Gastrocnemius medialis (tissue), 4 donors: ENCODE measurements at regions of chr6 and their contacts with region 1.

Region 1: DNA sequence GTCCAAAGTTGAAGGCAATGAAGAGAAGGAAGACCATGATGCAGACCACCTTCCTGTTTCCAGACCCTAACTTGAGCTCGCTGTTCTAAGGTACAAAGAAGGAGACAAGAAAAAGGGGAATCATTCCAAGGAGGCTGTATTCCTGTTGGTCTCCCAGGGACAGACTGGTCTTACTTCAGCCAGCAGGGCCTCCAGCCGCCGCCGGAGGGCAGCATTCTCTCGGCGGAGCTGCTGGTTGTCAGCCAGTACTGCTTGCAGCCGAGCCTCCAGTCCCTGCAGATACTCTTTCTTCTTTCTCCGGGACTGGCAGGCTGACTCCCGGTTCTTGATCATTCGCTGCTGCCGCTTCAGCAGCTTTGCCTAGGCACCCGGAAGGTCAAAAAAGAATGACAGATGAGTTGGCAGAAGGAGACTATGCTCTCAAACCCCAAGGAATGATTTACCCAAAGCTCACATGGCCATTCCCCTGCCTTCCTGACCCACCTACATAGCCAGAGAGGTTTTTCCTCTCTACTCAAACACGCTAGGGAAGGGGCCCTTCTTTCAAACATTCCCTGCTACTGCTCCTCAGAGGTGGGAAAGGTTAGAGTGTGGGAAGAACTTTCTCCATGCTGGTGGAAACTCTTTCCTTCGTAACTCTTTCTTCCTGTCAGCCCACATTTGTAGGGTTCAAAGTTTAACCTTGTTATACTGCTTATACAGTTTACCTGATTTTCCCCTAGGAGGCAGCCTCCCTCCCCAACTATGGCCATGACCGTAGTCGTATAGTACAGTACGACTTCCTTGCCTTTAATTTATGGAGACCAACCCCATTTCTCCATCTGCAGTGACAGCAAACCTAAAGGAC is 9.0 kb downstream of the ATF6B start:
- DNase-seq: peak; percentile 64 to 83
- ATAC-seq: peak; percentile 82 to 88
- H3K4me3 ChIP-seq: no peak overlapping the region
- H3K27ac ChIP-seq: peak overlapping the region in 2 of 4 donors; percentile 25 to 43
- H3K4me1 ChIP-seq: peaks cover 3 to 8% of the 10 kb centered on the region in 2 donors
- H3K27me3 ChIP-seq: no peaks in the 10 kb centered on the region
- CTCF ChIP-seq: peak; percentile 82 to 91 (median 88)
- POLR2A ChIP-seq: no peak

Region 2: DNA sequence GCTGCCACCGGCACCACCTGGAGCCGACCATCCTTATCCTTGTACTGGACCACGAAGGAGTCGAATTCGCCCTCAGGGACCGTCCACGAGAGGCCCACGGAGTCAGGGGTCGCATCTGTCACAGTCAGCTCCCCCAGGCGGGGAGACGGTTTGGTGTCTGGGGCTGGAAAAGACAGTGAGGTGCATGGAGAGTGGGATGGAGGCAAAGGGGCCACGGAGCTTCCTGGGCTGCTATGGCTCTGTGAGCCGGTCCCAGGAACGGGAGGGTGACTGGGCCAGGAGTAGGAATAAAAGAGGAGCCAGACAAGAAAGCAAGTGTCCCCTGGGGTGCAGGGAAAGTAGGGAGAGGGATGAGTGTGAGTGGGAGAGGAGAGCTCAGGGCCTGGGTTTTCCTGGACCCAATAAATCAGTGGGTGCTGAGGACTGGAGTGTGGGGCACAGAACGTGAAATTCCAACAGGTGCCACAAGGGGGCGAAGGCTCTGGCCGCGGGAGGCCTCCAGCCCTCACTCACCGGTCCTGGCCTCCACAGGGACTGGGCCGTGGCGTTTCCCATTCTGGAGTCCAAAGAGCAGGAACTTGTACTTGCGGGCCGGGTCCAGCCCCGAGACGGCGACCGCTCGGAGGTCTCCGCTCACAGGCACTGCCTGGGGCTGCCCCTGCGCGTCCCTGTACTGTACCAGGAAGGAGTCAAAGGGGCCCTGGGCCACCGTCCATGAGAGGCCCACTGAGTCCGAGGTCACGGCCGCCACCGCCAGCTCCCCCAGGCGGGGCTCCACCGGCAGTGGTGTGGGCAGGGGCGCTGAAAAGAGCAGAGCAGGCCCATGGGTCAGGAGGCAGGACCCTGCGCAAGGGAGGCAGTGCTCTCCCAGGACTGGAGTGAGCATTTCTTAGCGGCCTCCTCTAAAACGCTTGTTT is 70.9 kb before region 1 on chr6:
- in situ Hi-C with region 1: no loop called
- intact Hi-C with region 1: loop called (anchors 10 kb)
- DNase-seq: peak in 1 of 2 donors; percentile 57
- ATAC-seq: peak; percentile 54 to 76
- H3K4me3 ChIP-seq: no peak overlapping the region
- H3K27ac ChIP-seq: peak overlapping the region; percentile 17 to 75 (median 69)
- H3K4me1 ChIP-seq: peaks cover 0 to 6% of the 10 kb centered on the region in 2 donors
- H3K27me3 ChIP-seq: no peaks in the 10 kb centered on the region
- CTCF ChIP-seq: peak; percentile 65 to 81 (median 74)
- POLR2A ChIP-seq: no peak

Region 3: GRCh38 chr6:32153564-32154513 is 34.8 kb after region 1 on chr6 and contains the start of gene PPT2:
- in situ Hi-C with region 1: no loop called
- intact Hi-C with region 1: loop called (anchors 1 kb)
- DNase-seq: peak; percentile 80 to 85
- ATAC-seq: peak; percentile 85 to 86
- H3K4me3 ChIP-seq: peak within 1 kb of the TSS; percentile 77 to 97 (median 84)
- H3K27ac ChIP-seq: peak within 1 kb of the TSS; percentile 77 to 93 (median 87)
- H3K4me1 ChIP-seq: peaks cover 25 to 29% of the 10 kb centered on the region in 2 donors
- H3K27me3 ChIP-seq: peaks cover 7 to 19% (median 8%) of the 10 kb centered on the region in 3 donors
- CTCF ChIP-seq: peak in 2 of 5 experiments; percentile 14 to 15
- POLR2A ChIP-seq: peak; percentile 23 to 38
- total RNA-seq, gene PPT2: 16.2 to 72.7 (median 21.4) TPM

Region 4: GRCh38 chr6:33384581-33385020 is 1265.6 kb after region 1 on chr6:
- in situ Hi-C with region 1: no loop called
- intact Hi-C with region 1: no loop called
- DNase-seq: no peak
- ATAC-seq: no peak
- H3K4me3 ChIP-seq: no peak overlapping the region
- H3K27ac ChIP-seq: no peak overlapping the region
- H3K4me1 ChIP-seq: no peaks in the 10 kb centered on the region
- H3K27me3 ChIP-seq: no peaks in the 10 kb centered on the region
- CTCF ChIP-seq: no peak
- POLR2A ChIP-seq: no peak